Right cardiac atrium (tissue), 5 donors: ENCODE measurements at regions of chr11 and their contacts with region 1.

Region 1: DNA sequence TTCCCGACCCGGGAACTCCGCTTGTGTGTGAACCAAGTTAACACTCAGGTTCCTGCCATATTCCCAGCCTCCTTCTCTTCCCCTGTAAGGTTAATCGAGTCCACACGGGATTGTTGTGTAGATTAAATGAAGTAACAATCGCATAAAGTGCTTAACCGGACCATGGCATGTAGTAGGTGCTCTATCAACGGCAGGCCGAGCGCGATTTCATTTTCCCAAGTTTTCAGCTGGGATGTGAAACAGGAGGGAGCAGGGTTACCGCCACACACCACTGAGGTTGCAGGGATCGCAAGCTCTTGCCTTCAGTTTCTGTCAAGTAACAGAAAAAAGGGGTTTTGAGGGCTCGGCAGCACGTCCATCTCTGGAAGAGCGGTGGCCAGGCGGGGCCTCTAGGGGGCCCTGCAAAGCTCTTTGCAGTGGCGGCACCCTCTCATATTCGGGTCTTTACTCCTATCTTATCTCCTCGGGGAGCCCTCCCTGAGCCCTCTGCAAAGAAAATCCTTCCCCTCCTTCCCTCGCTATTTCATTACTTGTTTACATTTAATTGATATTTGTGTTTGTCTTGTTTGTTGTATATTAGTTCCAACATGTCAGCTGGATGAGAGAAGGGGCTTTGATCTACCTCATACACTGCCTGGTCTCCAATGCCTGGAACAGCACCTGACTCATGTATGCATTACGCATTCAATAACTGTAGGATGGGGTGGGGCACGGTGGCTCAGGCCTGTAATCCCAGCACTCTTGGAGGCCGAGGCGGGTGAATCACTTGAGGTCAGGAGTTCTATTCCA is 818 bp upstream of the PLEKHA7 start:
- DNase-seq: peak in 1 of 3 donors; percentile 52
- ATAC-seq: peak; percentile 13 to 17
- H3K4me3 ChIP-seq: peak overlapping the region; percentile 81
- H3K27ac ChIP-seq: peak overlapping the region; percentile 23
- H3K4me1 ChIP-seq: no peaks in the 10 kb centered on the region
- H3K27me3 ChIP-seq: no peaks in the 10 kb centered on the region

Region 2: DNA sequence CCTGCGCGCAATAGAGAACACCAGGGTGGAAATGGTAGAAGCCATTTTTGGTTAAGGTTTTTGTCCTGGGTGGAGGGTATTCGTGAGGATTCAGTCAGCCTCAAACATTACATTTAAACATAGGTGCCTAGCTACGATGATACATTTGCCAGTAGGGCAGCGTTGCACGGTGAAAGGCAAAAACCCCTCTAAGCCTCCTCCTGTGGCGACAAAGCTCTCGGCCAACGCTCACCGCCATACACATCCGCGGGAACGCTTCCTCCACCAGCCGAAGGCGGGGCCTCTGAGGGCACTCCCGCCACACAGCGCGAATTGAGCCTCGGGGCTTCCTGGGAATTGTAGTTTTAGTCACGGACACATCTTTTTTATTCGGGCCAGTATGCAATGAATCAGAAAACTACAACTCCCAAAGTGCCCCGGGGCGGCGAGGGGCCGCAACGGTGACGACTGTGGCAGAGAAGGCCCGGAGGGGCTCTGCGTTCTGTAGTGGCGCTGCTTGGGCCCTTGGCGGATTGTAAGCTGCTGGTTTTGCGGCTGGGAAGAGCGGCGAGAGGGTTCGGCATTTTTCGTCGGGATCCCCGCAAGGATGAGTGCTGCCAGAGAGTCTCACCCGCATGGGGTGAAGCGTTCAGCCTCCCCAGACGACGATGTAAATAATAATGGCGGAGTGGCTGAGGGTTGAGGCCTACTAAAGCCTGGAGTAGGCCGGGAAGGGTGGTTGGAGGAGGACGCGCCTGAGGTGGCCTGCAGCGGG is 276.7 kb before region 1 on chr11 and contains the start of gene C11orf58:
- intact Hi-C with region 1: no loop called
- DNase-seq: peak; percentile 95 to 97 (median 96)
- ATAC-seq: peak; percentile 98
- H3K4me3 ChIP-seq: peak within 1 kb of the TSS; percentile 100
- H3K27ac ChIP-seq: peak within 1 kb of the TSS; percentile 100
- H3K4me1 ChIP-seq: peaks cover 6% of the 10 kb centered on the region
- H3K27me3 ChIP-seq: no peaks in the 10 kb centered on the region
- total RNA-seq, gene C11orf58: 128 to 139 (median 130) TPM

Region 3: DNA sequence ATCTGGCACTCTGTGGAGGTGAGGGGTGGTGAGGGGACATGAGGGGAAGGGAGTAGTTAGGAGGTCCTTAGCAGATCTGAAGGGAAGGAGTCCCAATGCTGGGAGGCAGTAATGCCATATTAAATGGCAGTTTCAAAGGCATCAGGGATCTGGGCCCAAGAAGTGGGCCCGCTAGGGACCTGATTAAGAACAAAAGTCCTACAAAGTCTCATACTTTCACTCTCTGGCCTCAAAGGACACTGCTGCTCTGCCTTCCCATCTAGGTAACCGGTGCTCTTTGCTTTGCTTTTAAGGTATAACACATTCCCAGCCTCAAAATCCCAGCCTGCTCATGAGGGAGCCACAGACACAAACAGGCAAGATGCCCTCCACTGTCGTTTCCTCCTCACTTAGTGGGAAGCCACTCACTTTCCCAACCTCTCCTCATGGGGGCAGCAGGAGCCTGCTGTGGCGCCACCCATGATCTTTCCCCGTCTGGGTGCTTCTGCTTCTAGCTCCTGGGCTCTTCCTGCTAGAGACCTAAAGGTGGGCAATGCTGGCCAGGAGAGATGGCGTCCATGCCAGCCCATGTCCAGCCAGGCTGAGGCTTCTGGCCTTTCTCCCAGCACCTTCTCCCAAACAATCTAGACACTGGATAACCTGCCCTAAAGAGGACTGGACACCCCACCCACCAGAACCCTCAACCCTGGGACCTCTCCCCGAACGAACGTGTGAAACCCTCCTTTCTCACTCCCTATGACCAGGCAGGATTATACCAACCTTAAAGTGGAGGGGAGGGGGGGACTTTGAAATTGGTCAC is 69.2 kb before region 1 on chr11:
- intact Hi-C with region 1: loop called in 1 of 4 experiments (anchors 10 kb)
- DNase-seq: peak; percentile 53 to 75 (median 71)
- ATAC-seq: peak; percentile 78 to 80
- H3K4me3 ChIP-seq: no peak overlapping the region
- H3K27ac ChIP-seq: no peak overlapping the region
- H3K4me1 ChIP-seq: no peaks in the 10 kb centered on the region
- H3K27me3 ChIP-seq: no peaks in the 10 kb centered on the region

Region 4: GRCh38 chr11:16969010-16969999 is 45.7 kb before region 1 on chr11:
- intact Hi-C with region 1: no loop called
- DNase-seq: no peak
- ATAC-seq: no peak
- H3K4me3 ChIP-seq: no peak overlapping the region
- H3K27ac ChIP-seq: no peak overlapping the region
- H3K4me1 ChIP-seq: no peaks in the 10 kb centered on the region
- H3K27me3 ChIP-seq: no peaks in the 10 kb centered on the region